PC-9 (cell line): ENCODE measurements at regions of chr3 and their contacts with region 1.

Region 1: GRCh38 chr3:98901392-98902350 is at the start of gene DCBLD2:
- DNase-seq: peak; percentile 99 to 100
- H3K4me3 ChIP-seq: peak within 1 kb of the TSS; percentile 89
- H3K27ac ChIP-seq: peak within 1 kb of the TSS; percentile 54
- H3K4me1 ChIP-seq: peaks cover 47% of the 10 kb centered on the region
- H3K27me3 ChIP-seq: no peaks in the 10 kb centered on the region
- CTCF ChIP-seq: no peak
- total RNA-seq, gene DCBLD2: 83.1 and 112 TPM in 2 replicates

Region 2: GRCh38 chr3:97971677-97972567 is 929.7 kb before region 1 on chr3 and contains the start of gene RIOX2:
- CTCF ChIA-PET with region 1: no interaction called
- POLR2A ChIA-PET with region 1: no interaction called
- intact Hi-C with region 1: loop called (anchors 5 kb)
- DNase-seq: peak; percentile 86 to 99
- H3K4me3 ChIP-seq: peak within 1 kb of the TSS; percentile 71
- H3K27ac ChIP-seq: peak within 1 kb of the TSS; percentile 67
- H3K4me1 ChIP-seq: peaks cover 33% of the 10 kb centered on the region
- H3K27me3 ChIP-seq: no peaks in the 10 kb centered on the region
- CTCF ChIP-seq: no peak
- total RNA-seq, gene RIOX2: 28.3 and 33.1 TPM in 2 replicates

Region 3: GRCh38 chr3:98563661-98564281 is 337.9 kb before region 1 on chr3:
- CTCF ChIA-PET with region 1: interaction called, 18 read pairs
- POLR2A ChIA-PET with region 1: no interaction called
- intact Hi-C with region 1: no loop called
- DNase-seq: peak in 1 of 2 experiments; percentile 88
- H3K4me3 ChIP-seq: 0 out of 2 replicates have a peak overlapping the region, but pooled peaks have one; percentile 8
- H3K27ac ChIP-seq: peak overlapping the region; percentile 40
- H3K4me1 ChIP-seq: peaks cover 37% of the 10 kb centered on the region
- H3K27me3 ChIP-seq: no peaks in the 10 kb centered on the region
- CTCF ChIP-seq: no peak

Region 4: GRCh38 chr3:98921957-98922356 is 20.3 kb after region 1 on chr3:
- CTCF ChIA-PET with region 1: interaction called, 3 read pairs
- POLR2A ChIA-PET with region 1: interaction called, 4 read pairs
- intact Hi-C with region 1: loop called (anchors 1 kb)
- DNase-seq: no peak
- H3K4me3 ChIP-seq: no peak overlapping the region
- H3K27ac ChIP-seq: peak overlapping the region; percentile 96
- H3K4me1 ChIP-seq: peaks cover 39% of the 10 kb centered on the region
- H3K27me3 ChIP-seq: no peaks in the 10 kb centered on the region
- CTCF ChIP-seq: no peak

Region 5: GRCh38 chr3:99167071-99167470 is 265.4 kb after region 1 on chr3:
- CTCF ChIA-PET with region 1: no interaction called
- POLR2A ChIA-PET with region 1: no interaction called
- intact Hi-C with region 1: no loop called
- DNase-seq: no peak
- H3K4me3 ChIP-seq: no peak overlapping the region
- H3K27ac ChIP-seq: no peak overlapping the region
- H3K4me1 ChIP-seq: no peaks in the 10 kb centered on the region
- H3K27me3 ChIP-seq: no peaks in the 10 kb centered on the region
- CTCF ChIP-seq: no peak

Region 6: GRCh38 chr3:99651561-99651960 is 749.9 kb after region 1 on chr3:
- CTCF ChIA-PET with region 1: no interaction called
- POLR2A ChIA-PET with region 1: interaction called, 16 read pairs
- intact Hi-C with region 1: no loop called
- DNase-seq: peak in 1 of 2 experiments; percentile 45
- H3K4me3 ChIP-seq: no peak overlapping the region
- H3K27ac ChIP-seq: no peak overlapping the region
- H3K4me1 ChIP-seq: peaks cover 3% of the 10 kb centered on the region; the same call in 1 of the 2 replicates
- H3K27me3 ChIP-seq: no peaks in the 10 kb centered on the region
- CTCF ChIP-seq: no peak